ENCODE measurements at regions of chr16 and their contacts with region 1.

Region 1: DNA sequence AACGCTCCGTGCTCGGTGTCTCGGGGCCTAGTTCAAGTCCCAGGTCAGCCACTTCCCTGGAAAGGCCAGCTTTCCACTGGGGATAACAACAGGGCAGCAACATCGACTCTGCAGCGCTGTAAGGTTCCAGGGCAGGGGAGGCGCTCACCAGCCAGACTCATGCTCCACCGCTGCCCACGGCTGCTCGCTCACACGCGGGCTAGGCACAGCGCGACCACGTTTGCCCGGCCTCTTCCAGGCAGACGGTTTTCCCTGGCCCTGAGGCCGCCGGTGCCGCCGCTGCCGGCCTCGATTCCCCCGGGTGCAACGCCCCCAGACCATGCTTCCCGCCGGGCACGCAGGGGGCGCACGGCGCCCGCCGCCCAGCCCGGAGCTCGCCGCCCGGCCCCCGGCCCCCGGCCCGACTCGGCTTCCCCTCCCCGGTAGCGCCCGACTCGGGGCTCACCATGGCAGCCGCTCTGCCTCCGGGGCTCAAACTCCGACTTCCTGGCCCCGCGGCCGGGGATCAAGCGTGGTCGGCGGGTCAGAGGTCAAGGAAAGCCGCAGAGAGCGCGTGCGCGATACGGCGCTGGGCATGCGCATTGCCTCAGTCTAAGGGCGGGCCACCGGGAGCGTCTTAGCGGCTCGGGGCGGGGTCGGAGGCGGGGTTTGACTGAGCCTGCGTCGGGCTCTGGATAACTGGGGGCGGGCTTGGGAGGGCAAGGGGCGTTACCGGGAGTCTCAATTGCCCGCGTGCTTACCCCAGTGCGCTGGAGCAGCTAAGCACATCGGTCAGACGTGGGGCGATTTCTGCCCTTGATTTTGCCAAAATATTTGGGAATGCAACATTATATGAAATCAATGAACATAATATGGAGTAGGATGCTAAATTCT is at the start of gene PAM16:
- DNase-seq: peak; percentile 99
- H3K4me3 ChIP-seq: peak within 1 kb of the TSS; percentile 82 to 100 (median 88)
- H3K27ac ChIP-seq: peak within 1 kb of the TSS; percentile 87 to 94 (median 93)
- H3K4me1 ChIP-seq: peaks cover 0 to 22% (median 16%) of the 10 kb centered on the region in 4 donors
- H3K27me3 ChIP-seq: no peaks in the 10 kb centered on the region
- CTCF ChIP-seq: no peak
- EP300 ChIP-seq: no peak
- POLR2A ChIP-seq: peak; percentile 49
- total RNA-seq, gene PAM16: 26.5 to 40.5 (median 29.2) TPM

Region 2: GRCh38 chr16:4293822-4294457 is 57.1 kb before region 1 on chr16:
- in situ Hi-C with region 1: no loop called
- intact Hi-C with region 1: no loop called
- DNase-seq: no peak
- H3K4me3 ChIP-seq: no peak overlapping the region
- H3K27ac ChIP-seq: peak overlapping the region; percentile 49 to 81 (median 60)
- H3K4me1 ChIP-seq: peaks cover 14 to 29% (median 20%) of the 10 kb centered on the region in 4 donors
- H3K27me3 ChIP-seq: no peaks in the 10 kb centered on the region
- CTCF ChIP-seq: no peak
- EP300 ChIP-seq: no peak
- POLR2A ChIP-seq: no peak

Region 3: GRCh38 chr16:4402439-4403132 is 51.6 kb after region 1 on chr16:
- in situ Hi-C with region 1: loop called in 1 of 4 experiments (anchors 10 kb)
- intact Hi-C with region 1: no loop called
- DNase-seq: peak; percentile 85
- H3K4me3 ChIP-seq: no peak overlapping the region
- H3K27ac ChIP-seq: no peak overlapping the region
- H3K4me1 ChIP-seq: peaks cover 0 to 5% (median 4%) of the 10 kb centered on the region in 4 donors
- H3K27me3 ChIP-seq: no peaks in the 10 kb centered on the region
- CTCF ChIP-seq: peak; percentile 88 to 94 (median 93)
- EP300 ChIP-seq: no peak
- POLR2A ChIP-seq: no peak

Region 4: DNA sequence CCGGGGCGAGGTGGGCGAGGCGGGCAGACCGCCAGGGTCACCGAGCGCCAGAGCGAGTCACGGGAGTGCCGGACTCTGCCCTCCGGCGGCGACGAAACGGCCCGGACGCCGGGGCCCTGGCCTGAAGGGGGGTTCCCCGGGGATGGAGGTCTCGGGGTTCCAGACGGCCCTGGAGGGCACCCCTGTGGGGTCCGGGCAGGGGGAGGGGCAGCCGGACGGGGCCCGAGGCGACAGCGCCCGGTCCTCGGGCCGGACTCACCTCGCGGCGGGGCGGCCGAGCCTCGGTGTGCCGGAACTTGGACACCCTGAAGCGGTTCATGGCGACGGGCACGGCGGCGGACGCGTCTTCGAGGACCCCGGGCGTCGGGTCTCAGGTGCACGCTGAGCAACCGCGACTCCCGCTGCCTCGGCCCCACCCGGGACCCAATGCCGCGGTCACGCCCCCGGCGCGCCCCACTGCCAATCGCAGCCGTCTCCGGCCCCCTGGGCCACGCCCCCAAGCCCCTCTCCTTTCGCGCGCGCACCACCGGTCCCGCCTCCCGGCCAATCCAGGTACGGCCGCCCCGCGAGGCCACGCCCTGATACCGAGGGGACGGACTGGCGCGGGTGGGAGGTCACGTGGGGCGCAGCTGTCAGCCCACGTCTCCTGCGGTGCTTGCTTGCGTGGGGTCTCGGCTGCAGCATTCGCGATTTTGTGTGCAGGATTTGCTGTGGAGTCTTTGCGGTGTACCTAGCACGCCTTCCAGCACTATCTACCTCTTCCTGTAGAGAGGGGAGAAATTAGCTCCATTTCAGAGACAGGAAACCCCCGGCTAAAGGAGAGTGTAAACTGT is 65.4 kb after region 1 on chr16 and contains the start of gene CORO7:
- in situ Hi-C with region 1: loop called in 1 of 4 experiments (anchors 10 kb)
- intact Hi-C with region 1: no loop called
- DNase-seq: peak; percentile 98
- H3K4me3 ChIP-seq: peak within 1 kb of the TSS; percentile 79 to 98 (median 93)
- H3K27ac ChIP-seq: peak within 1 kb of the TSS; percentile 92 to 99 (median 96)
- H3K4me1 ChIP-seq: peaks cover 17 to 49% (median 29%) of the 10 kb centered on the region in 4 donors
- H3K27me3 ChIP-seq: no peaks in the 10 kb centered on the region
- CTCF ChIP-seq: peak in 1 of 5 experiments; percentile 45
- EP300 ChIP-seq: no peak
- POLR2A ChIP-seq: peak; percentile 82
- total RNA-seq, gene CORO7: 46.8 to 330 (median 58.1) TPM

Measured in transverse colon (tissue), 4 donors.